Activated naive CD4-positive, alpha-beta T cell treated with anti-CD3 and anti-CD28 coated beads, Interleukin-2, amount 10 ng/mL, durations not matched to agents 7 days and 5 days (primary cell): ENCODE measurements at regions of chr6 and their contacts with region 1.

Region 1: GRCh38 chr6:63598049-63599036 is 26.1 kb downstream of the LOC128125822 start:
- DNase-seq: peak; percentile 81
- H3K4me3 Mint-ChIP-seq: peak overlapping the region; percentile 77
- H3K27ac Mint-ChIP-seq: no peak overlapping the region
- H3K4me1 Mint-ChIP-seq: peaks cover 20% of the 10 kb centered on the region
- H3K27me3 Mint-ChIP-seq: peaks cover 21% of the 10 kb centered on the region

Region 2: DNA sequence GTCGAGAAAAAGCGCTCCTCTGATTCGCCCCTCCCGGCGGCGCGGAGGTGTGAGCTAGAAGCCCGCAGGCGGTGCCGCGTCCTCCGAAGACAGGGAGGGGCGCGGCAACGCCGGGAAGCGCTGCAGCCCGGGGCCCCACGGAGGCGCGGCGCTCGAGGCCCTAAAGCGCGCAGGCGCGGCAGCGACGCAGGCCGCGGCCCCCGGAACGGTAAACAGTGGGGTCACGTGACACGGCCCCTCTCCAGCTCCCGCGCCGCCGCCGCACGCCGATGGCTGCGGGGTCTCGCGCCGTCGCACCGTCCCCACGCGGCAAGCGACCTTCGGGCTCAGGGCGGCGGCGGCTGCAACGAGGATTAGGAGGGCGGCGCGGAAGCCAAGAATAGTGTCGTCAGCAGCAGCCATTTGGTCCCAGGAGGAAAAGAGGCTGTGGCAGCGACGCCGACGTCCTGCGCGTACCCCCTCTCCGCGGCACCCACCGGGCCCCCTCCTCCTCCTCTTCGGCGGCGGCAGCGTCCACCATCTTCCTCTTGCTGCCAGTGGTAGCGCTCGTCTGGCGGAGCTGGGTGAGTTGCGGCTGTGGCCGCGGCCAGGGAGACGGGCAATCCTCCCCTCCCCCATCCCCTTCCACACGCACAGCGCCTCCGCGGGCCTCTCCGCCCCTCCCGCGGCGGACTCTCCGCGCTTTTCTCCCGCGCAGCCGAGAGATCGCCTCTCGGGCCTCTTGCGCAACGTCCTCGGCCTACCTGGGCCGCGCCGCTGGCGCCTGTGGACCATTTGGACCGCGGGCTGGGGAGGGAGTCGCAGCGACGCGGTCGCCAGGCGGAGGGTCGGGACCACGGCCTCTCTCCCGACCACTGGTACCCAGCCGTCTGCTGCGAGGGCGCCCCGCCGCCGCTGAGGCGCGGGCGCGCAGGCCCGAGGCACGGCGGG is 37.5 kb after region 1 on chr6 and contains the start of gene PHF3:
- CTCF ChIA-PET with region 1: interaction called, 18 read pairs
- DNase-seq: peak; percentile 91
- H3K4me3 Mint-ChIP-seq: peak within 1 kb of the TSS; percentile 99
- H3K27ac Mint-ChIP-seq: peak within 1 kb of the TSS; percentile 98
- H3K4me1 Mint-ChIP-seq: peaks cover 46% of the 10 kb centered on the region
- H3K27me3 Mint-ChIP-seq: no peaks in the 10 kb centered on the region

Region 3: GRCh38 chr6:63764318-63764916 is 166.1 kb after region 1 on chr6:
- CTCF ChIA-PET with region 1: interaction called, 54 read pairs
- DNase-seq: no peak
- H3K4me3 Mint-ChIP-seq: no peak overlapping the region
- H3K27ac Mint-ChIP-seq: no peak overlapping the region
- H3K4me1 Mint-ChIP-seq: no peaks in the 10 kb centered on the region
- H3K27me3 Mint-ChIP-seq: peaks cover 12% of the 10 kb centered on the region